ENCODE measurements at regions of chr7 and their contacts with region 1.

Region 1: GRCh38 chr7:992709-993607 is 10.0 kb downstream of the CYP2W1 start:
- DNase-seq: peak; percentile 91
- CTCF ChIP-seq: peak; percentile 100

Region 2: DNA sequence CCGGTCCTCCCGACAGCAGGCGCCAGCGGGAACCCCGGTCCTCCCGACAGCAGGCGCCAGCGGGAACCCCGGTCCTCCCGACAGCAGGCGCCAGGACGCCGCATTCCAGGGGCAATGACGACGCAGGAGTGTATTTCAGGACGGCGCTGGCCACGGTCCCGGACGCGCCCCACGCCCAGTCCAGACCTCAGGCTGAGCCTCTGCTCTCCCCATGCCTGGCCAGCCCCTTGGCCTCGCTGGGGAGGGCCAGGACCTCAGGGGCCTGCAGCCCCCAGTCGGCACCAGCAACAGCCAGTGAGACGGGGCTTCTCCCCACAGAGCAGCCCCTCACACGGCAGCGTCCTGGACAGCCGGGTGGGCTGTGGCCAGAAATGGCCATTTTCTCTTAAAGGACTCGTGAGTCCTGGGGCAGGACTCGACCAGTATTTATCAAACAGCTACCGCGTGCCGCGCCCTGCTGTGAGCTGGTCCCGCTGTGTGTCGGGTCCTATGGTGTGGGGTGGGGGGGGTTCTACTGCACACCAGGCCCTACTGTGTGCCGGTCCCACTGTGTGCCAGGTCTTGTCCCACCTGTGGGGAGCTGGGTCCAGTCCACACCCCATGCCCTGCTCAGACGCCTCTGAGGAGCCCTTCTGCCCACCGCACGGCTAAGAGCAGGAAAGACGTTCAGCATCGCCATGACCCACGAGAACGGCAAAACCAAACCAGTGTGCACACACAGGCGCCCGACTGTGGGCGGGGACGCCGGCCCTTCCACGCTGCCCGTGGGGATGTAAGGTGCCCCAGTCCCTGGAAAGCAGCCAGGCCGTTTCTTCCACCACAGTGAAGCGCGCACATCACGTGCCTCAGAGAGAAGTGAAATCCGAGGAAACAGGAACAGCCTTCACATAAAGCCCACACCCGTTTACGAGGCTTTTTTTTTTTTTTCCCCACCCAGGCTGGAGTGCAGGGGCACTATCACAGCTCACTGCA is 83.3 kb before region 1 on chr7:
- CTCF ChIA-PET with region 1: interaction called, 12 read pairs
- POLR2A ChIA-PET with region 1: no interaction called
- DNase-seq: no peak
- CTCF ChIP-seq: no peak

Region 3: DNA sequence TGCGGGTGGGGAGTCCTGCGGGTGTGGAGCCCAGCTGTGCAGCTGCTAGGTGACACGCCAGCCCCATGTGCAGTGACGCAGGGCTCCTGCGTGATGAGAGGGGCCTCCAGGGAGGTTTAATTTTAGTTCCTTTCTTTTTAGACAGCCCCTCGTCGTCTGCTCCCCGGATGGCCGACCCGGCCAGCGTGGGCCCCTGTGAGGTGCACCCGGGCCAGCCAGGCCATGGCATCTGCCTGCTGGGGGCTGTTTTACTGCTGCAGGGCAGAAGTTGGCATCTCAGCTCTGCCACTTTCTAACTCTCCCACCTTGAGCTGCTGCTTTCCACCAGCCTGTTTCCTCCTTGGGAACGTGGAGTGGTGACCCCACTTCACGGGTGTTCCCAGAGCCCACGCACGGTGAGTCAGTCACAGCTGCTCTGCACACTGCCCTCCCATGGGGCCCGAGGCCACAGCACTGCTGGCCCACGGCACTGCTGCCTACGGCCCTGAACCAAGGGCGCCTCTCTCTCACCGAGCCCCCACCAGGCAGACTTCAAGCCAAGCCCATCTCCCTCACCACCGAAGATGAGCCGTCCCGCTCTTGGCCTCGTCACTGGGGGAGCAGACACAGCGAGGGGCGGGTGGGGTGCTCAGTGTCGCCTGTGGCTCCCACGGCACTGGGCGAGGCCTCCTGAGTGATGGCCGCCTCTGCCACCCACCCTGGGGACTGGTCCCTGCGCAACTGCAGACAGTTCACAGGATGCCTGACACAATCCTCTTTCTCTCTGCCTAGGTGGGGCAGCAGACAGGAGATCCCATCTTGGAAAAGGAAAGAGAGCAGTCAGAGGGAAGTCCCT is 11.3 kb after region 1 on chr7:
- CTCF ChIA-PET with region 1: interaction called, 30 read pairs
- POLR2A ChIA-PET with region 1: no interaction called
- DNase-seq: no peak
- CTCF ChIP-seq: no peak

Region 4: DNA sequence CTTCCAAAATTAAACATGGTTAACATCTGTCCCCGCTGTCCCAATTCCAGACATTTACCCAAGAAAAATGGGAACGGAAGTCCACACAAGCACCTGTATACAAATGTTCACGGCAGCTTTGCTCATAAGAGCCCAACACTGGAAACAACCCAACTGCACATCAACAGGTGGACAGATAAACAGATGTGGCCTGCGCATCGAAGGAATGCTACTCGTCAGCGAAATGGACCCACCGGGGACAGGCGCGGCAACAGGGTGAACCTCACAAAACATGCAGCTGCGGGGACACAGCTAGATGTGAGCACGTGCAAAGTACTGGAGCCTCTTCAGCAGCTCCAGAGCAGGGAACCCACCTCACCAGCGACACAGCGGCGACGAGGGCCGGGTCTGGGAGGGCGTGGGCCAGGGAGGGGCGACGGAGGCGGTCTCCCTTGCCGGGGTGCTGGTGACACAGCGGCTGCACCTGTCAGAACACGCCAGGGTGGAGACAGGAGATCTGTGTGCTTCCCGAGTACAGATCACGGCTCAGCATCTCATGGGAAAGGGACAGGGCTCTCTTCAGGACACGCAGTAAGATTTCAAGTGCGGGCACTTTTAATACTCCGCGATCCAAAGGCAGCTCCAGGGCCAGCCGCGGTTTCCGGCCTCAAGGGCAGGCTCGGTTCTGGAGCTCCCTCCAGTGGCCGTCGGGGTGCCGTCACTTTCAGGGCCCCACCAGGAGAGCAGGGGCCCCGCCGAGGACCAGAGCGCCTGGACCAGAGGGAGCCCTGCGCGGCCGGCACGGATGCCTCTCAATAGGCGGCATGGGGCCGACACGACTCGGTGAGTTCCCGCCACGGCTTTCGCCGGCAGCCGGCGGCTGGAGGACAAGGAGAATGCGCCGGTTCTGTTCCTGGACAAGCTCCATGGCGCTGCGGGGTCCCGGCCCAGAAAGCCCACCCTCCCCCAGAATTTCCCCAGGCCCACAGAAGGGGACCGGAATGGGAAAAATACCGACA is 72.6 kb after region 1 on chr7:
- CTCF ChIA-PET with region 1: interaction called, 391 read pairs
- POLR2A ChIA-PET with region 1: no interaction called
- DNase-seq: peak; percentile 92
- CTCF ChIP-seq: peak; percentile 94

Region 5: GRCh38 chr7:1137510-1138167 is 144.7 kb after region 1 on chr7:
- CTCF ChIA-PET with region 1: interaction called, 36 read pairs
- POLR2A ChIA-PET with region 1: no interaction called
- DNase-seq: no peak
- CTCF ChIP-seq: no peak

Region 6: GRCh38 chr7:1163121-1163520 is 170.2 kb after region 1 on chr7:
- CTCF ChIA-PET with region 1: interaction called, 13 read pairs
- POLR2A ChIA-PET with region 1: no interaction called
- DNase-seq: no peak
- CTCF ChIP-seq: no peak

Measured in GM10248 (cell line).